Panc1 (cell line): ENCODE measurements at regions of chr2 and their contacts with region 1.

Region 1: GRCh38 chr2:211367711-211368110 is 811.3 kb downstream of the CPS1 start:
- DNase-seq: no peak
- ATAC-seq: no peak
- H3K4me3 ChIP-seq: no peak overlapping the region
- H3K27ac ChIP-seq: no peak overlapping the region
- H3K4me1 ChIP-seq: no peaks in the 10 kb centered on the region
- H3K27me3 ChIP-seq: no peaks in the 10 kb centered on the region
- CTCF ChIP-seq: no peak

Region 2: DNA sequence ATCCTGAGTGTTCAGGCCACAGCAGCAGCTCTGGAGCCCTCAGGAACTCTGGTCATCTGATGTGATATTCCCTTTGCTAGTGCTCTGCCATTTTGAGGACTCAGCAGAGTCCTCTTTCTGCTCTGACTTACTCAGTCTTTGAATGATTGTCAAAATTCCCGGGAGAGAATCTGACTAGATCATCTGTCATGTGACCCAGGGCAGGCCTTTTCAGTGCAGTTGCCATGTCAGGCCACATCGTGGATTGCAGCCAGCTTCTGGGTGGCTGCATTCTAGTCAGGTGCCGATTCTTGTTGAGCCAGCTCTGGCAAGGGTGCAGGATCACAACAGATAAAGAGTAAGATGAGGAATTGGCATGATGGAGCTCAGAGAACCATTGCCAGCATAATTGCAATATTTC is 15.7 kb before region 1 on chr2:
- CTCF ChIA-PET with region 1: interaction called, 10 read pairs
- POLR2A ChIA-PET with region 1: no interaction called
- in situ Hi-C with region 1: no loop called
- intact Hi-C with region 1: no loop called
- DNase-seq: no peak
- ATAC-seq: no peak
- H3K4me3 ChIP-seq: no peak overlapping the region
- H3K27ac ChIP-seq: no peak overlapping the region
- H3K4me1 ChIP-seq: no peaks in the 10 kb centered on the region
- H3K27me3 ChIP-seq: no peaks in the 10 kb centered on the region
- CTCF ChIP-seq: no peak

Region 3: DNA sequence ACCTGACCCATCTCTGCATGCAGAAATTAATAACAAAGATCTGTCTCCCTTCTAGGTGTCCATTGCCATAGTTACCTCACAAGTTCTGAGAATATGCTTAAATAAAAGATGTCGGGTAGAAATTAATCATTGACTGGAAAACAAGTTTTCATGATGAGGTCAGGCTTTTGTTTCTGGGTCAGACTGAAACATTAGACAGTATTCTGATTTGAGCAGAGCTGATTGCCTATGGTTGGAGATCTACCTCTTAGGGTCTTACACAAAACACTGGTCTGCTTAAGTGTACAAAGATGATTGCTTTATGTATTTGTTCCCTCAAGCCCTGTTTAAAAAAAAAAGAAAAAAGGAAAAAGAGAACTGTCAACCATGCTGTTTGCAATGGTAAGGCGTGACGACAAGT is 145.1 kb after region 1 on chr2:
- CTCF ChIA-PET with region 1: no interaction called
- POLR2A ChIA-PET with region 1: no interaction called
- in situ Hi-C with region 1: no loop called
- intact Hi-C with region 1: no loop called
- DNase-seq: no peak
- ATAC-seq: no peak
- H3K4me3 ChIP-seq: no peak overlapping the region
- H3K27ac ChIP-seq: no peak overlapping the region
- H3K4me1 ChIP-seq: no peaks in the 10 kb centered on the region
- H3K27me3 ChIP-seq: no peaks in the 10 kb centered on the region
- CTCF ChIP-seq: no peak

Region 4: DNA sequence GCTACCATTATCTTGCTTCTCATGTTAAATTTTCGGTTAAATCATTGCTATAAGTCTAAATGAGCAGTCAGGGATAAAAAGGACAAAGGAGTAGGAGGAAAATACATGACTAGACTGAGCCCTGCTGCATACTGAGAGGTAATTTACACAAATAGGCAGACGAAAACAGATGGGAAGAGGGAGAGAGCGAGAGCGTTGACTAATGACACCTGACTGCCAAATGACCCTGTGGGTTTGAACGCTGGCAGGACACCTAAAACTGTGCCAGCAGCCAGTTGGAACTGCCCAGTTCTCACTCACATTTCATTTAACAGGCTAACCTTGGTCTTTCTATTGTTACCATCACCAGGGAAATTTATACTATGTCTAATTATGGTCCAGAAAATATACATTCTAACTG is 166.9 kb after region 1 on chr2:
- CTCF ChIA-PET with region 1: no interaction called
- POLR2A ChIA-PET with region 1: no interaction called
- in situ Hi-C with region 1: no loop called
- intact Hi-C with region 1: no loop called
- DNase-seq: no peak
- ATAC-seq: no peak
- H3K4me3 ChIP-seq: no peak overlapping the region
- H3K27ac ChIP-seq: no peak overlapping the region
- H3K4me1 ChIP-seq: no peaks in the 10 kb centered on the region
- H3K27me3 ChIP-seq: no peaks in the 10 kb centered on the region
- CTCF ChIP-seq: no peak

Region 5: DNA sequence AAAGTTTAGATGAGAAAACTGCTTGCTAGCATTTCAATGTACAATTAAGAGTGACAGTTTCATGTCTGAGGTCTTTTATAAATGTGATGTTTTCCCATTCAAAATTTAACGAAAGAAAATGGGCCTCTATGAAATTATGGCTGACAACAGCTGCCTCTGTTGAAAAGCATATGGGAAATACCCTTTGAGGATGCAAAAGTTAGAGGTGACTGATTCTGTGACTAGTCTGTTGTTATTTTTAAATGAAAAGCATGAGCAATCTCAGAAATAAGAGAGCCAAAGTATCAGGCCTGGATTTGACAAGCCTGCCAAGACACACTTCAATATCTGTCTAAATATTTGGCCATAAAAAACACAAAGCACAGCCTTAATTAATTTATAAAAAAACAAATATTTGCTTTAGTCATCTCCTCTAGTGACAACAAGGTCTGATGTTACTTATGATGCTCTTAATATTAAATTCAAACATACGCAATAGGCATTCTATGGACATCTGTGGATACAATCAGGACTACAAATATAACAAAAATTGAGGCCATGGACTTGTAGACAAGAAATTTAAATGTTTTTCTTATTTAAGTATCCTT is 590.2 kb after region 1 on chr2:
- CTCF ChIA-PET with region 1: no interaction called
- POLR2A ChIA-PET with region 1: no interaction called
- in situ Hi-C with region 1: no loop called
- intact Hi-C with region 1: no loop called
- DNase-seq: no peak
- ATAC-seq: no peak
- H3K4me3 ChIP-seq: no peak overlapping the region
- H3K27ac ChIP-seq: no peak overlapping the region
- H3K4me1 ChIP-seq: no peaks in the 10 kb centered on the region
- H3K27me3 ChIP-seq: no peaks in the 10 kb centered on the region
- CTCF ChIP-seq: no peak